ENCODE measurements at regions of chr21 and their contacts with region 1.

Region 1: DNA sequence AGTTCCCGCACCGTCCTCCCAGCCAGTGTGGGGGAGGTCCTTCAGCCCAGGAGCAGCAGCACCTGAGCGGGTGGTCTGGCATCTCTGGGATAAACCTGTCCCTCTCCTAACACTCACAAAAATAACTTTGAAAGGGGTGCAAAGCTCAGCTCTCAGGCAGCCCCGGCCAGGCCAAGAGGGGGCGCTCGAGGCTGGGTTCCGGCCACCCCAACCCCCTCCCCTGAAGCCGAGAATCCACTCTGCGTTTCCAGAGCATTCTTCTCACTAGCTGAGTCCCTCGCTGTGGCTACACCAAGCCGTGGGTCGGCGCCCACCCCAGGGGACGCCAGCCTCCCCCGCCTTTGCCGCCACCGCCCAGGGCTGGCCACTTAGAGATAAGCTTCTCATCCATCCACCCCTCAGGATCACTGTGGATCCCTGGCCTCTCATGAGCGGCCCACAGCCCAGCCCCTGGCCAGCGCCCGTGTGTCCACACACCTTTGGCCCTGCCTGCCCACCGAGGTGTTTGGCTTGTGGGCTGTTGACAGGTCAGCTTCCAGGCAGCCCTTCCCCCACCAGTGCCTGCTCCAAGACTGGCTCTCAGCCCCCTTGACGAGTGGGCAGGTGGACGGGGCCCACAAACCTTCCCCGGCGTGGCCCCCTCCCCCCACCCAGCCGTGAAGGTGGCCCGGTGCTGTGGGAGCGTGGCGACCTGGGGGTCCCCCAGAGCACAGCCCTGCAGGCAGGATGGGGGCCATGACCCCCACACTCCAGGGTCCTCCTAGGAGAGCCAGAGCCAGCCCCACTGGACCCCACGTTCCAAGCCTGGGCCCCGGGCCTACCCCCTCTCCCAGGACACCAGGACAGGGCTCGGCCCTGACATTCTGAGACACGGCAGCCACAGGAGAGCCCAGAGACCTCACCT is 1.9 kb downstream of the FTCD start:
- DNase-seq: peak in 1 of 2 donors; percentile 69
- ATAC-seq: peak; percentile 55 to 76 (median 70)
- H3K4me3 ChIP-seq: peak overlapping the region in 9 of 10 donors; percentile 5 to 39 (median 31)
- H3K27ac ChIP-seq: peak overlapping the region in 5 of 10 donors; percentile 6 to 42 (median 30)
- H3K4me1 ChIP-seq: peaks cover 4 to 15% (median 10%) of the 10 kb centered on the region in 9 donors
- H3K27me3 ChIP-seq: no peaks in the 10 kb centered on the region
- CTCF ChIP-seq: peak; percentile 56 to 78 (median 70)

Region 2: DNA sequence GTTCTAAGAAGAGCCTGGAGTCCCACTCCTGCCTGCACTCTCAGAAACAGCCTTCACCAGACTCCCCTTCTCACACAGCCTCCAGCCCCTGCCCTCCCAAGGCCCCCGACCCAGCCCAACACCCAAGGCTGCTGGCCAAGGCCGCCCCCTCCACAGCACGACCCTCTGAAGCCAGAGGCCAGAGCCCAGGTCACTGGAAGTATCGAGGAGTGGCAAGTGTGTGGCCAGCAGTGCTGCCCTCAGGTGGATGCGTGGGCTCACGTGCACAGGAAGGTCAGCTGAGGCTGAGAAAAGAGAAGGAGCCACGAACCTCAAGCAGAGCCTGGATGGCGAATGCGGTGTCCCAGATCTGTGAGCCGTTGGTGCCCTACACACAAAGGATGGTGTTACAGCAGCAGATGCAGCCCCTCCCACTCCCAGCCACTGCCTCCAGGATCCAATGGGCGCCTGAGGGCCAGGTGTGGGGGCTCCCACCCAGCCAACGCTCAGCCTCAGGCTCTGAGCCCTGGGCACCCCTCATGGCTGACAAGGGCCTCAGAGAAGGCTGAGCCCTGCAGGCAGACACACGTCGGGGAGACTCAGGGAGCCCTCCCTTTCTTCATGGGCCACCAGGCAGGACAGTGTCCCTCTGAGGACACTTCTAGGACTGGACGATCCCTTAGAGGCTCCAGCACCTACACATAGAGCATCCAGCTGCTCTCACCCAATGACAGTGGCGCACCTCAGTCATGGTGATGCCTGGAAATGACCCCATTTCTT is 57.1 kb after region 1 on chr21:
- intact Hi-C with region 1: loop called in 2 of 10 experiments (anchors 10 kb)
- DNase-seq: no peak
- ATAC-seq: no peak
- H3K4me3 ChIP-seq: no peak overlapping the region
- H3K27ac ChIP-seq: no peak overlapping the region
- H3K4me1 ChIP-seq: peaks cover 0 to 7% (median 0%) of the 10 kb centered on the region in 9 donors
- H3K27me3 ChIP-seq: no peaks in the 10 kb centered on the region
- CTCF ChIP-seq: peak in 2 of 9 donors; percentile 6 to 10

Measured in heart right ventricle (tissue), 16 donors.